ENCODE measurements at regions of chr1 and their contacts with region 1.

Region 1: GRCh38 chr1:58739856-58740466 is 40.1 kb upstream of the MYSM1 start:
- DNase-seq: no peak
- H3K4me3 Mint-ChIP-seq: no peak overlapping the region
- H3K27ac Mint-ChIP-seq: no peak overlapping the region
- H3K4me1 Mint-ChIP-seq: no peaks in the 10 kb centered on the region
- H3K27me3 Mint-ChIP-seq: no peaks in the 10 kb centered on the region

Region 2: DNA sequence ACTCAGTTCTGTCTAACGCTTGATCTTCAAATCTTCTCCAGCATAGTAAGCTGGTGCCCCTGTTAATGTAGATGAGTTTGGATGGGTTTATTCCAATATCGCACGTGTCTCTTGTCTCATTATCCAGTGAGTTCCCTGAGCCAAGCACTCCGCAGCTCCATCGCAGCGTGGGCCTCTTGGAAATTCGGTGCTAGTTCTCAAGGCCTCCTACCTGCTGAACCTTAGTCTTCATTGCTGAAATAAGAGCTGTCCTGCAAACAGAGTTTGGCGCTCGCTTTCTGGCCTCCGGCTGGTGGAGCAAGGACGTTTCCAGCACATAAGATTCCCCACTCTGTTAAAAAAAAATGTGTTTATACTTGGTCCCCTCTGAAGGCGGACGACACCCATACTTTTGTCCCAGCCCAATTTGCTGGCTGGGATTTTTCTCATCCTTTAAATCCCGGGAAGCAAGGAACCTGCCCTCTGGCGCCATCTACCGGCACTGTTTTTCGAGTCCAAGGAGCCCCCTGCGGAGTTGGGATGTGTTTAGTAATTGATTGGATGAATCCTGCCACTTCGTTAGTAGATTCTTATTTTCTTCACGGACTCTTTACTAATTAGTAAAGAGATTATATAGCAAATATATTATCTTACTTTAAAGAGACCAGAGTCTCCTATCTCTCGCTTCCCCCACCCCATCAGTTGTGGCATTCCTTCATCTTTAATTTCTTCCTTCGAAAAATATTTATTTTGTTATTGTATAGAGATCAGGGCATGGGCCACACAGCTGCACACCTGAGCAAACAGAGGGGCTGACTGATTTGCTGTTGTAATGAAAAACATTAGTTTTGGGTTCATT is 29.2 kb after region 1 on chr1:
- CTCF ChIA-PET with region 1: interaction called, 10 read pairs
- POLR2A ChIA-PET with region 1: no interaction called
- intact Hi-C with region 1: loop called (anchors 1 kb)
- DNase-seq: peak; percentile 57
- H3K4me3 Mint-ChIP-seq: no peak overlapping the region
- H3K27ac Mint-ChIP-seq: no peak overlapping the region
- H3K4me1 Mint-ChIP-seq: peaks cover 7% of the 10 kb centered on the region
- H3K27me3 Mint-ChIP-seq: peaks cover 2% of the 10 kb centered on the region